ENCODE measurements at regions of chr9 and their contacts with region 1.

Region 1: DNA sequence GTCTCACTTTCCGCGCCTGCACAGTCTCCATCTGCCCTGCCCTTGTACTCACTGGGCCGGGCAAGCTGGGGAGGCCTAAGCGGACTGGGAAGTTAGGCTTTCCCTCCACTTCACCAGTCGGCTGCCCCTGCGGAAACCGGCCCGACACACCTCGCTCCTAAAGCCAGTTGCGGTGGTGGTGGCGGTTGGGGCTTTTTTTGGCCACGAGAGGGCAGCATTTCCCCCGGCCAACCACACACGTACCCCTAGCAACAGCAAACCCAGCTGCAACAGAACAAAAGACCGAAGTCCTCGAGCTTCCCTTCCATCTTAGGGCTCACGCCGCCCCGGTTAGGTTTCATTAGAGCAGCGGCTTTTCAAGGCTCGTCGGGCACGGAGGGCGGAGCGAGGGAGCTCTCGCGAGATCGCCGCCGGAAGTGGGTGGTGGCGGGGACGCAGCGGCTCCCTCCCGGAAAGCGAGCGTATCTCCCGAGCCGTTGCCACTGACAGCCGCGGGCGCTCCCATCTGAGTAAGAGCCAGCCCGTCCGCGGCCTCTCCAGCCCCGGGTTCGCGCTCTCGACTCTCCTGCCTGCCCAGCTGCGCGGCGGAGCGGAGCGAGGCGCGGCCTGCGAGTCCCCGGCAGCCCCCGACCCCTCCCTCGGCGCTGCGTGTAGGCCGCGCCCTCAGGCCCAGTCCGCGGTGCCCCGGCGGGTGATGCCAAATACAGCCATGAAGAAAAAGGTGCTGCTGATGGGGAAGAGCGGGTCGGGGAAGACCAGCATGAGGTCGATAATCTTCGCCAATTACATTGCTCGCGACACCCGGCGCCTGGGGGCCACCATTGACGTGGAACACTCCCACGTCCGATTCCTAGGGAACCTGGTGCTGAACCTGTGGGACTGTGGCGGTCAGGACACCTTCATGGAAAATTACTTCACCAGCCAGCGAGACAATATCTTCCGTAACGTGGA is at the start of gene RRAGA:
- DNase-seq: peak; percentile 98
- H3K4me3 ChIP-seq: peak within 1 kb of the TSS; percentile 72 to 96 (median 81)
- H3K27ac ChIP-seq: peak within 1 kb of the TSS; percentile 94 to 98 (median 97)
- H3K4me1 ChIP-seq: peaks cover 30 to 55% (median 45%) of the 10 kb centered on the region in 6 donors
- H3K27me3 ChIP-seq: no peaks in the 10 kb centered on the region
- CTCF ChIP-seq: peak; percentile 75 to 95 (median 90)
- POLR2A ChIP-seq: peak; percentile 22 to 80 (median 35)
- total RNA-seq, gene RRAGA: 48.1 to 71.3 (median 52.2) TPM

Region 2: GRCh38 chr9:19102631-19103345 is 53.5 kb after region 1 on chr9 and contains the start of gene HAUS6:
- intact Hi-C with region 1: loop called (anchors 10 kb)
- DNase-seq: peak; percentile 99
- H3K4me3 ChIP-seq: peak within 1 kb of the TSS; percentile 75 to 94 (median 87)
- H3K27ac ChIP-seq: peak within 1 kb of the TSS; percentile 85 to 96 (median 94)
- H3K4me1 ChIP-seq: peaks cover 10 to 42% (median 27%) of the 10 kb centered on the region in 6 donors
- H3K27me3 ChIP-seq: no peaks in the 10 kb centered on the region
- CTCF ChIP-seq: peak; percentile 56 to 95 (median 84)
- POLR2A ChIP-seq: no peak
- total RNA-seq, gene HAUS6: 10.1 to 13.5 (median 12.8) TPM

Region 3: DNA sequence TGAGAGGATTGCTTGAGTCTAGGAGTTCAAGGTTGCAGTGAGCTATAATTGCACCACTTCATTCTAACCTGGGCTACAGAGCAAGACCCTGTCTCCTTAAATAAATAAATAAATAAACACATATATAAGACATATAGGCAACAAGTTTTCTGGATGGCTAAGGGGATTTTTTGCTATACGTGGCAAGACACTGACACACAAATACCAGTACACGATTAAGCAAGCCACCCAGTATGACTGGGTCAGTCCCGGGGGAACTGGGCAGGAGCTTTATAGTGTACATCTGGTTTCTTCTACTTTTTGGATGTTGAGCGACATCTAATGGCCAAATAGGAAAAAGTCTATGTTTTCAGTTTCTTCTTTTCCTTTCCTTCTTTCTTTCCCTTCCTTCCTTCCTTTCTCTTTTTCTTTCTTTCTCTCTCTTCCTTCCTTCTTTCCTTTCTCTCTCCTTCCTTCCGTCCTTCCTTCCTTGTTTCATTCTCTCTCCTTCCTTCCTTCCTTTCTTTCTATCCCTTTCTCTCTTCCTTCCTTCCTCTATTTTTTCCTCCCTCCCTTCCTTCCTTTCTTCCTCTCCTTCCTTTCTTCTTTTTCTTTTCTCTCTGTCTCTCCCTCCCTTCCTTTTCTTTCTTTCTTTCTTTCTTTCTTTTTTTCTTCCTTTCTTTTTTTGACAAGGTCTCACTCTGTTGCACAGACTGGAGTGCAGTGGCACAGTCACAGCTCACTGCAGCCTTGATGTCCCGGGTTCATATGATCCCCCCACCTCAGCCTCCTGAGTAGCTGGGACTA is 125.1 kb after region 1 on chr9:
- intact Hi-C with region 1: loop called (anchors 10 kb)
- DNase-seq: no peak
- H3K4me3 ChIP-seq: no peak overlapping the region
- H3K27ac ChIP-seq: no peak overlapping the region
- H3K4me1 ChIP-seq: peaks cover 0 to 29% (median 15%) of the 10 kb centered on the region in 6 donors
- H3K27me3 ChIP-seq: no peaks in the 10 kb centered on the region
- CTCF ChIP-seq: peak; percentile 7 to 88 (median 59)
- POLR2A ChIP-seq: no peak

Region 4: GRCh38 chr9:19456996-19457692 is 407.9 kb after region 1 on chr9:
- intact Hi-C with region 1: loop called (anchors 10 kb)
- DNase-seq: no peak
- H3K4me3 ChIP-seq: peak overlapping the region in 2 of 8 donors; percentile 17 to 37
- H3K27ac ChIP-seq: no peak overlapping the region
- H3K4me1 ChIP-seq: peaks cover 0 to 17% (median 9%) of the 10 kb centered on the region in 6 donors
- H3K27me3 ChIP-seq: no peaks in the 10 kb centered on the region
- CTCF ChIP-seq: peak; percentile 87 to 97 (median 95)
- POLR2A ChIP-seq: no peak

Measured in spleen (tissue), 13 donors.